GM10248 (cell line): ENCODE measurements at regions of chr14 and their contacts with region 1.

Region 1: DNA sequence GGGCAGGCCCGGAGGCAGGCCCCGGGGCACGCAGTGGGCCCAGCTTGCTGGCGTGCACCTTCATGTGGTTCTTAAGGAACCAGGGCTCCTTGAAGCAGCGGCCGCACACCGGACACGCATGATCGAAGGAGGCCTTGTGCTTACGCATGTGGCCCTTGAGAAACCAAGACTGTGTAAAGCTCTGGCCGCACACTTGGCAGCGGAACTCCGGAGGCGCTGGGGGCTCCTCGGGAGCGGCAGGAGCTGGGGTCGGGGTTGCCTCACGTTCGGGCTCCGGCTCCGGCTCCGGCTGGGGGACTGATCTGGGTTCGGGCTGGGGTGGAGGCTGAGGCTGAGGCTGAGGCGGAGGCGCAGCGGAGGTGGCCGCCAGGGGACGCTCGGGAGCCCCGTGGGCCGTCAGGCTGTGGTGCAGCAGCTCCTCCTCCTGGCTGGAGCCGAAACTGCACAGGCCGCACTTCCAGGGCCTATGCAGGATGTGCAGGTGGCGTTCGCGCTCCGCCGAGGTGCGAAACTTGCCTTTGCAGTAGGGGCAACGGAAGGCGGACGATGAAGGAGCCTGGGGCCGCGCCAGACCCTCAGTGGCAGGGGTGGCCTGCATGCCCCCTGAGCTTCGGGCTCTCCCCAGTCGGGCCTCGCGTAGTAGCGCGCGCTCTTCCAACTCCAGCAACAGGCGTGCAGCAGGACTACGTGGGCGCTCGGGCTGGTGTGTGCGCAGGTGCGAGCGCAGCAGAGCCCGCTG is 6.0 kb downstream of the ZNF219 start:
- DNase-seq: peak; percentile 92
- CTCF ChIP-seq: peak; percentile 100

Region 2: GRCh38 chr14:21003788-21004346 is 88.6 kb before region 1 on chr14:
- CTCF ChIA-PET with region 1: interaction called, 208 read pairs
- POLR2A ChIA-PET with region 1: no interaction called
- DNase-seq: no peak
- CTCF ChIP-seq: no peak

Region 3: GRCh38 chr14:21039585-21040369 is 52.7 kb before region 1 on chr14:
- CTCF ChIA-PET with region 1: interaction called, 11 read pairs
- POLR2A ChIA-PET with region 1: no interaction called
- DNase-seq: peak; percentile 44
- CTCF ChIP-seq: peak; percentile 41

Region 4: GRCh38 chr14:21057803-21058675 is 34.4 kb before region 1 on chr14 and contains the start of gene RNASE8:
- CTCF ChIA-PET with region 1: interaction called, 13 read pairs
- POLR2A ChIA-PET with region 1: no interaction called
- DNase-seq: no peak
- CTCF ChIP-seq: no peak

Region 5: DNA sequence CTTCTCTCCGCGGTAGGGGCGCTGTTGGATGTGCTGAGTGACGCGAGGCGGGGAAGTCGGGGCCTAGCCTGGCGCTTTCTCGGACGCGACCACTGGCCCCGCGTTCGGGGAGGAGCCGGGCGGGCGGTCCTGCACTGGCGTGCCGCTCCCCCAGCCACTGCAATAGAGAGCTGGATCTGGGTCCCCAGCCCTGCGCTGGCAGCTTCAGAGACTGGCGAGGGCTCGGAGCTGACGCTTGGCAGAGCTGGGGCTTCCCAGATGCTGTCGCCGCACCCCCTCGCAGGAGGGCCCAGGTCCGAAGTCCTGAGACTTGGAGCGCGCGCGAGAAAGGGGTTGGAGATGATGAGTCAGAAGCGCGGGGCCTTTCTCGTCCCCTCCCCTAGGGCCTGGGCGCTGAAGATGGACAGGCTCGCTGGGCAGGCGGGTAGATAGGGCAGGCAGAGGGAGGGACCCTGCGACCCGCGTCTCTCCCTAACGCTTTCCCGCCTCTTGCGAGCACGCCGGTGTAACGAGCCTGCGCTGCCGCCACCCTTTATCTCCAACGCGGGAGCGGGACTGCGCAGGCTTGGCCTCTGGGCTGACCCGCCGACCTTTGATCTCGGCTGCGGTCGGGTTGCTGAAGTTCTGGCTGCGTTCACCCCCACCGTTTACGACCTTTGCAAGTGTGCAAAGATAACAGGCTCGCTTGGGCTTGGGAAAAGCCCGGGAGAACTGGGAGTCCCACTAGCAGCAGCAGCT is 11.4 kb after region 1 on chr14:
- CTCF ChIA-PET with region 1: interaction called, 228 read pairs
- POLR2A ChIA-PET with region 1: interaction called, 3 read pairs
- DNase-seq: peak; percentile 94
- CTCF ChIP-seq: peak; percentile 69